ENCODE measurements at regions of chr16 and their contacts with region 1.

Region 1: DNA sequence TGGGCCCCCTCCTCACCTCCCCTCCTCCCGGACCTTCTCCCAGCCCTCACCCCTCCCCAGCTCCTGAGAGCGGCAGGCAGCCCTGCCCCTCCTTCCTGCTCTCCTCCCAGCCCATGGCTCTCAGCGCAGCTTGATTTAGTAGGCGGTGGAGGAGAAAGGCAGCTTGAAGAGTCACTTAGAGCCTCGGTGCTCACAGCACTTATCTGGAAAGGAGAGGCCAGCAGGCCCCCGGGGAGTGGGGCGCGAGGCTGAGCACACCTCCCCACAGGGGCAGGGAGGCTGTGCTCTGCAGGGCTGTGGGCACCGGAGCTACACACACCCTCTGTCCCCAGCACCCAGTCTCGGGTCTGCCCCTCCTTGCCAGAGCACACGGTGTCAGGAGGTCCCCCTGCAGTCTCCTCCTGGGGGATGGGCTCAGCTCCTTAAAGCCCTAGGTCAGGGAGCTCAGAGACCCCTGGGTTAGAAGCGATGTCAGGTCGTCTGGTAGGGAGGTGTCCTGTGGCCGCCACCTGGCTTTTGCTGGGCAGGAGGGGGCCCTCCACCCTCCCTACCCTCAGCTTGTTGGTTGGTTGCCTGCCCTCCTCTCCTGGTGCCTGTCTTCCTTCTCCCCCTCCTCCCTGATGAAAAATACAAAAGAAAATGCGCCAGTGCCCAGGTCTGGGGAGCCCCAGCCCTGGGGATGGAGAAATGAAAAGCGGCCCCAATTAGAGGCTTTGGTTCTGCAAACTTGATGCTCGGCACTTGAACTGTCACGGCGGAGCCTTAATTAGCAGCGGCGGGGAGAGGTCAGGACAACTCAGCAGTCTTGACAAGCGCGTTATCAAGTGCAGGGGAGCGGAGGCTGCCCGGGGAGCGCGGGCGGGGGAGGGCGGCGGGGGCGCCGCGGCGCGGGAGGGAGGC is 151.1 kb upstream of the GSE1 start:
- DNase-seq: peak in 1 of 2 experiments; percentile 76
- H3K4me3 ChIP-seq: peak overlapping the region; percentile 4 to 57 (median 46)
- H3K27ac ChIP-seq: no peak overlapping the region
- H3K4me1 ChIP-seq: peaks cover 7 to 33% (median 25%) of the 10 kb centered on the region in 4 experiments
- H3K27me3 ChIP-seq: peaks cover 5 to 49% (median 36%) of the 10 kb centered on the region in 4 experiments; a peak in 6 of 7 replicates
- CTCF ChIP-seq: no peak
- EP300 ChIP-seq: no peak
- POLR2A ChIP-seq: no peak
- RAD21 ChIP-seq: no peak

Region 2: GRCh38 chr16:85437166-85438055 is 24.7 kb before region 1 on chr16:
- CTCF ChIA-PET with region 1: interaction called, 172 read pairs
- POLR2A ChIA-PET with region 1: interaction called, 3 read pairs
- DNase-seq: no peak
- H3K4me3 ChIP-seq: peak overlapping the region in 1 of 4 experiments; percentile 50; a peak in 2 of 8 replicates
- H3K27ac ChIP-seq: peak overlapping the region; percentile 21; the same call in 1 of the 2 replicates
- H3K4me1 ChIP-seq: peaks cover 14 to 47% (median 35%) of the 10 kb centered on the region in 4 experiments
- H3K27me3 ChIP-seq: peaks cover 0 to 7% (median 0%) of the 10 kb centered on the region in 4 experiments; a peak in 3 of 7 replicates
- CTCF ChIP-seq: no peak
- EP300 ChIP-seq: no peak
- POLR2A ChIP-seq: no peak; a peak in 1 of 3 replicates
- RAD21 ChIP-seq: no peak

Region 3: GRCh38 chr16:85473909-85474620 is 12.0 kb after region 1 on chr16:
- CTCF ChIA-PET with region 1: interaction called, 277 read pairs
- POLR2A ChIA-PET with region 1: interaction called, 4 read pairs
- DNase-seq: peak in 1 of 2 experiments; percentile 57
- H3K4me3 ChIP-seq: no peak overlapping the region
- H3K27ac ChIP-seq: no peak overlapping the region
- H3K4me1 ChIP-seq: peaks cover 4 to 23% (median 13%) of the 10 kb centered on the region in 4 experiments
- H3K27me3 ChIP-seq: no peaks in the 10 kb centered on the region; a peak in 1 of 7 replicates
- CTCF ChIP-seq: peak in 1 of 3 experiments; percentile 16; a peak in 1 of 4 replicates
- EP300 ChIP-seq: no peak
- POLR2A ChIP-seq: no peak
- RAD21 ChIP-seq: peak in 1 of 2 experiments; percentile 20; a peak in 2 of 4 replicates